ENCODE measurements at regions of chr20 and their contacts with region 1.

Region 1: DNA sequence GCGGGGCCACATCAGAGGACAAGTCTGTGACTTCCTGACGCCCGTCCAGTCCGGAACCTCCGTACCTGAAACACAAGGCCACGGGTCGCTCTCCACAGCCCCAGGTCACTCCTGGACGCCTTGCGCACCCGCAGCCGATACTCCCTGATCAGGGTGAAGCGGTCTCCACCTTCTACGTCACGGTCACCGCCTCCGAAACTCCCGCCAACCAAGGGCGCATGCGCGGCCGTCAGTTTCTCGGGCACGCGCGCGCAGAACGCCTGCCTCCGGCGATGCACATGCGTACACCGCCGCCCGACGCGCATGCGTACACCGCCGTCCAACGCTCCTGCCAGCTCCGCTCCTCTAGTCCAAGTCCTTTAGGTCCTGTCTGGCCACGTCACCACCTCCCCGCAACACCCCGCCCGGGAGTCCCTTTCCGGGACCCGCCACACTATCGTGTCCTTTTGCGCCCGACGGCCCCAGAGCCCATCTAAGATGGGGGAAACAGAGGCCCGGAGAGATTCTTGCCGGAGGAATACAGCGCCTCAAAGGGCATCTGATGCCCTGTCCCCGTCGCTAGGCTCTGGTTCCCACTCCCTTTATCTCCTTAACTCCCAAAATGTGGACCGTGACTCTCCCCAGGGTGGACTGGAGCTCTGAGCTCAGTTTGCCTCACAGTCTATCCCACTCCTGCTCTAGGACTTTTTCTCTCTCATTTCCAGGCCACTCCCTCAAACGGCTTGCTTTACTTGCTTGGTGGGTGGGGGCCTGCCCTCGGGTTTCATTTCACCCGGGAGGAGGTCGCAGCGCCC is at the start of gene DSN1:
- DNase-seq: peak; percentile 99
- H3K4me3 ChIP-seq: peak within 1 kb of the TSS; percentile 52 to 92 (median 61)
- H3K27ac ChIP-seq: peak within 1 kb of the TSS; percentile 93 to 99 (median 97)
- H3K4me1 ChIP-seq: peaks cover 6 to 32% (median 15%) of the 10 kb centered on the region in 4 donors
- H3K27me3 ChIP-seq: no peaks in the 10 kb centered on the region
- CTCF ChIP-seq: no peak
- EP300 ChIP-seq: no peak
- POLR2A ChIP-seq: peak; percentile 84
- total RNA-seq, gene DSN1: 0.40 to 9.8 (median 5.1) TPM

Region 2: GRCh38 chr20:36573103-36573794 is 200.5 kb before region 1 on chr20 and contains the start of gene TGIF2:
- in situ Hi-C with region 1: loop called in 1 of 4 experiments (anchors 25 kb)
- intact Hi-C with region 1: no loop called
- DNase-seq: peak; percentile 87
- H3K4me3 ChIP-seq: peak within 1 kb of the TSS; percentile 59 to 81 (median 76)
- H3K27ac ChIP-seq: peak within 1 kb of the TSS; percentile 89 to 97 (median 92)
- H3K4me1 ChIP-seq: peaks cover 11 to 31% (median 26%) of the 10 kb centered on the region in 4 donors
- H3K27me3 ChIP-seq: no peaks in the 10 kb centered on the region
- CTCF ChIP-seq: no peak
- EP300 ChIP-seq: no peak
- POLR2A ChIP-seq: peak; percentile 35
- total RNA-seq, gene TGIF2: 0.75 to 130 (median 3.9) TPM

Region 3: GRCh38 chr20:36792422-36792821 is 18.6 kb after region 1 on chr20:
- in situ Hi-C with region 1: no loop called
- intact Hi-C with region 1: no loop called
- DNase-seq: no peak
- H3K4me3 ChIP-seq: no peak overlapping the region
- H3K27ac ChIP-seq: no peak overlapping the region
- H3K4me1 ChIP-seq: no peaks in the 10 kb centered on the region
- H3K27me3 ChIP-seq: no peaks in the 10 kb centered on the region
- CTCF ChIP-seq: peak in 2 of 5 experiments; percentile 10 to 18
- EP300 ChIP-seq: no peak
- POLR2A ChIP-seq: no peak

Region 4: GRCh38 chr20:37108676-37109075 is 334.9 kb after region 1 on chr20:
- in situ Hi-C with region 1: no loop called
- intact Hi-C with region 1: no loop called
- DNase-seq: no peak
- H3K4me3 ChIP-seq: no peak overlapping the region
- H3K27ac ChIP-seq: no peak overlapping the region
- H3K4me1 ChIP-seq: no peaks in the 10 kb centered on the region
- H3K27me3 ChIP-seq: no peaks in the 10 kb centered on the region
- CTCF ChIP-seq: no peak
- EP300 ChIP-seq: no peak
- POLR2A ChIP-seq: no peak